CD4-positive, alpha-beta T cell (primary cell): ENCODE measurements at regions of chr6 and their contacts with region 1.

Region 1: DNA sequence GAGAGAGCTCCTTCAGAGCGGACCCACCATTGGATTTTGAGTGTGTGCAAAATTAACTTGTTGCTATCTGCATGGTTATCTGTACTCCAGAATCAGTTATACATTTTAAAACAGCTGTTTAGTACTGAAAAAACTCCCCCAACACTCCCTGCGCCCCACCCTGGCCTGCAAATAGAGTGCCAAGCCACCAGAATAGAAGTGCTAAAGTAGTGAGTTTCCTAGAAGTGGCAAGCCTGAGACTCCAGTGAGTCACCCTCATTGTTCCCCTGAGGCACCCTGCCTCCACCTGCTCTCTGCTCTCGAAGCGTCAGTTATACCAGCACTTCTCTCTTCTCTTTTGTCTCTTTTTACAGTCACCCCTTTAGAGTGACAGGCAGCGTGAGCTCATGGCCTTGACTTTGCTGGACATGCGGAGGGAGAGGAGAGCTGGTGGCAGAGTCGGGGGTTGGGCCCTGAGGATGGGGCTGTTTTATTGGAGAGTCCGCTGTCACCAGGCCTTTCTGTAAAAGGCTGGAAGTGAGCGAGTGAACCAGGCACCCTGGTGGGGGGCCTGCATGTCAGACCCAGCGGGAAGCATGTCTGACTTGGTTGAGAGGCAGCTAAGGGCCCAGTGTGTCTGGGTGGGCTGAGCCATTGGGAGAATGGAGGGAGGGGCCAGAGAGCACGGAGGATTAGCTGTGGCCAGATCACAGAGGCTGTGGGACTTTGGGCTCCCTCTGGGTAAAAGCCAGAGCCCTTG is 10.4 kb downstream of the IGF2R start:
- DNase-seq: peak in 10 of 14 experiments; percentile 22 to 75 (median 50)
- ATAC-seq: peak; percentile 57
- H3K4me3 ChIP-seq: no peak overlapping the region
- H3K4me3 Mint-ChIP-seq: peak overlapping the region; percentile 59
- H3K27ac ChIP-seq: peak overlapping the region; percentile 25 to 66
- H3K27ac Mint-ChIP-seq: peak overlapping the region; percentile 84
- H3K4me1 ChIP-seq: peaks cover 81% of the 10 kb centered on the region
- H3K4me1 Mint-ChIP-seq: peaks cover 94% of the 10 kb centered on the region
- H3K27me3 ChIP-seq: no peaks in the 10 kb centered on the region
- H3K27me3 Mint-ChIP-seq: no peaks in the 10 kb centered on the region
- CTCF ChIP-seq: no peak

Region 2: DNA sequence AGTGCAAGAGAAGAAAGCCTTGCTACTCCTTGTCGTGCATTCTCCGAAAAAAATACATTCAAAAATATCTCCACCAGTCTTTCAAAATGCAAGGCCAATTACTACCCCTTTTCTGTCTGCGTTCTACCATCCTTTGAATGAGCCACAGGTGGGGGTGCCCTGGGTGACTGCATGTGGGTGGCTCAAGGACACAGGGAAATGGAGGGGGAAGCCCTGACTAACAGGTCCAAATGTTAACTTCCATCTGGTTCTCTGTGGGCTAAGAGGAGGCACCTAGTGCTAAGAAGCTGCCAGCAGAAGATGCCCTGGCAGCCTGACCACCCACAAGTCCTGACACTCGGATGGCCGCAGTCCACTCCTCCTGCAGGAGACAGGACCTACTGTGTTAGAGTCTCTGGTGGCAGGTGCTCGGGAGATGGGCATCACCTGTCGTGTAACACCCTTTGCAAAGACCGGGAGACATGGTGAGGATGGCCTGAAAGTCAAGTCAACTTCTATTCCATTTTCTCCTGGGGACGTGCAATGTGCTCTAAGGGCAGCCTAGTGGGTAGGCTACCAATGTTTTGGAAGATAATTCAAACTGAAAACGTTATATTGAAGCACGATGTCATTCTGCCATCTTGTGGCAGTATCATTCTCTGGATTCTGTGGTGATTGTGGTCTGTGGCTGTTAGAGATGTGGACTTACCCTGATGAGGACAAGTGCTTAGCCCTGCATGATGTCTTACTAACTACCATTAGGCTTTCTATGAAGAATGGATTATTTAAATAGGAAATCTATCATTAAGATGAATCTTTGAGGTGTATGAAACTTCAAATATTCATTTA is 37.8 kb before region 1 on chr6:
- CTCF ChIA-PET with region 1: no interaction called
- POLR2A ChIA-PET with region 1: no interaction called
- intact Hi-C with region 1: no loop called
- DNase-seq: peak in 8 of 14 experiments; percentile 5 to 80 (median 22)
- ATAC-seq: peak; percentile 82
- H3K4me3 ChIP-seq: no peak overlapping the region
- H3K4me3 Mint-ChIP-seq: no peak overlapping the region
- H3K27ac ChIP-seq: no peak overlapping the region
- H3K27ac Mint-ChIP-seq: no peak overlapping the region
- H3K4me1 ChIP-seq: peaks cover 4% of the 10 kb centered on the region
- H3K4me1 Mint-ChIP-seq: peaks cover 8% of the 10 kb centered on the region
- H3K27me3 ChIP-seq: no peaks in the 10 kb centered on the region
- H3K27me3 Mint-ChIP-seq: peaks cover 5% of the 10 kb centered on the region
- CTCF ChIP-seq: peak; percentile 46

Region 3: GRCh38 chr6:159968440-159969203 is 10.7 kb before region 1 on chr6 and contains the start of gene IGF2R:
- CTCF ChIA-PET with region 1: interaction called, 3 read pairs
- POLR2A ChIA-PET with region 1: interaction called, 20 read pairs
- intact Hi-C with region 1: no loop called
- DNase-seq: peak; percentile 86 to 97 (median 94)
- ATAC-seq: peak; percentile 89
- H3K4me3 ChIP-seq: peak within 1 kb of the TSS; percentile 76
- H3K4me3 Mint-ChIP-seq: peak within 1 kb of the TSS; percentile 98
- H3K27ac ChIP-seq: peak within 1 kb of the TSS; percentile 31 to 42
- H3K27ac Mint-ChIP-seq: peak within 1 kb of the TSS; percentile 91
- H3K4me1 ChIP-seq: peaks cover 41% of the 10 kb centered on the region
- H3K4me1 Mint-ChIP-seq: peaks cover 45% of the 10 kb centered on the region
- H3K27me3 ChIP-seq: no peaks in the 10 kb centered on the region
- H3K27me3 Mint-ChIP-seq: no peaks in the 10 kb centered on the region
- CTCF ChIP-seq: no peak
- total RNA-seq, gene IGF2R: 43.8 to 46.7 TPM

Region 4: DNA sequence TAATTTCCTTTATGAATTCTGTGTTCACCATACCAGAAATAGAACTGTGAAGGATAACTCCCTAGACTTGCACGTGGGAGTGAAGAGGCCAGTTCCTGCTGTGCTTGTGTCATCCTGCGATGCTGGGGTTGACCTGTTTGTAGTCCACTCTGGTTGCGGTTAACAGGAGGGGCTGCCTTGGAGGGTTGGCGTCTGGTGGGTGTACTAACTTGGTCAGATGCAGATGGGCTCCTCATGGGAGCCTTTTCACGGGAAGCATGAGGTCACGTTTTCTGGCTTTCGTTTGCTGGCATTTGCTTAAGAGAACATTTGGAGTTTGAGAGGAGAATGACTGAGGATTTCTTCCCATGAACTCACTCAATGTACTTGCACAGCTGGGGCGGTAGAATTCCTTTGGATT is 30.8 kb after region 1 on chr6:
- CTCF ChIA-PET with region 1: no interaction called
- POLR2A ChIA-PET with region 1: interaction called, 32 read pairs
- intact Hi-C with region 1: loop called (anchors 5 kb)
- DNase-seq: no peak
- ATAC-seq: no peak
- H3K4me3 ChIP-seq: no peak overlapping the region
- H3K4me3 Mint-ChIP-seq: no peak overlapping the region
- H3K27ac ChIP-seq: no peak overlapping the region
- H3K27ac Mint-ChIP-seq: no peak overlapping the region
- H3K4me1 ChIP-seq: peaks cover 21% of the 10 kb centered on the region
- H3K4me1 Mint-ChIP-seq: peaks cover 59% of the 10 kb centered on the region
- H3K27me3 ChIP-seq: no peaks in the 10 kb centered on the region
- H3K27me3 Mint-ChIP-seq: no peaks in the 10 kb centered on the region
- CTCF ChIP-seq: no peak

Region 5: DNA sequence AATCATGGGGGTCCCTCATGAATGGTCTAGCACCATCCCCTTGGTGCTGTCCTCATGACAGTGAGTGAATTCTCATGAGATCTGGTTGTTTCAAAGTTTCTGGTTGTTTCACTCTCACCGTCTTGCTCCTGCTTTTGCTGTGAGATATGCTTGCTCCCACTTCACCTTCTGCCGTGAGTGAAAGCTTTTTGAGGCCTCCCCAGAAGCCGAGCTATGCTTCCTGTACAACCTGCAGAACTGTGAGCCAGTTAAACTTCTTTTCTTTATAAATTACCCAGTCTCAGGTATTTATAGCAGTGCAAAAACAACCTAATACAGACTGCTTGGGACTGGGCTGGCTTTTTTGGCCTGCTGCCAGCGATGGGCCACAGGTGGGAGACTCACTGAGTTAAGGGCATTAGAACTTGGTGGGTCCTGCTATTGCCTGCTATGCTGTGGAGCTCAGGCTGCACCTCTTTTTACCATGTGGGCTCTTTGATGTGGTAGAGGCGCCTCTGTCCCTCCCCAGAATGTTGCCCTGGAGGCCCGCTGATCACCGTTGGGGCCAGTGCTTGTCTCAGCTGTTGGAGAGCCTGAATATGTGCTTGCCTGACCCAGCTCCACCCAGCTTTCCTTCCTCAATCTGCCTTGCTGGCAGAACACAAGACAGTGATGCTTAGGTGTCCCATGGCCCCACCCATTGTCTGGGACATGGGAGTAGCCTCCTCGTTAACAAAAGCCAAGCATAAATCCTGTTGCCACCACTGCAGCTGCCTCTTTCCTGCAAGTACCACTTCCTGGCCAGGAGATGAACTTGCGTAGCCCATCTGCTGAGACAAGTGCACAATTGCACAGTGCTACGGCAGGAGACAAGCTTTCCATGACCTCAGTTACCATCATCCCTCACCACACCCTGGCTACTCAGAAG is 36.7 kb after region 1 on chr6:
- CTCF ChIA-PET with region 1: no interaction called
- POLR2A ChIA-PET with region 1: interaction called, 32 read pairs
- intact Hi-C with region 1: loop called (anchors 5 kb)
- DNase-seq: peak in 13 of 14 experiments; percentile 9 to 66 (median 29)
- ATAC-seq: peak; percentile 79
- H3K4me3 ChIP-seq: peak overlapping the region; percentile 3
- H3K4me3 Mint-ChIP-seq: peak overlapping the region; percentile 65
- H3K27ac ChIP-seq: peak overlapping the region; percentile 46 to 79
- H3K27ac Mint-ChIP-seq: peak overlapping the region; percentile 80
- H3K4me1 ChIP-seq: peaks cover 32% of the 10 kb centered on the region
- H3K4me1 Mint-ChIP-seq: peaks cover 62% of the 10 kb centered on the region
- H3K27me3 ChIP-seq: no peaks in the 10 kb centered on the region
- H3K27me3 Mint-ChIP-seq: no peaks in the 10 kb centered on the region
- CTCF ChIP-seq: no peak

Region 6: GRCh38 chr6:160167604-160168399 is 188.5 kb after region 1 on chr6:
- CTCF ChIA-PET with region 1: no interaction called
- POLR2A ChIA-PET with region 1: no interaction called
- intact Hi-C with region 1: no loop called
- DNase-seq: no peak
- ATAC-seq: no peak
- H3K4me3 ChIP-seq: no peak overlapping the region
- H3K4me3 Mint-ChIP-seq: no peak overlapping the region
- H3K27ac ChIP-seq: no peak overlapping the region
- H3K27ac Mint-ChIP-seq: no peak overlapping the region
- H3K4me1 ChIP-seq: no peaks in the 10 kb centered on the region
- H3K4me1 Mint-ChIP-seq: no peaks in the 10 kb centered on the region
- H3K27me3 ChIP-seq: peaks cover 0 to 5% of the 10 kb centered on the region in 2 experiments
- H3K27me3 Mint-ChIP-seq: peaks cover 30% of the 10 kb centered on the region
- CTCF ChIP-seq: no peak

Region 7: GRCh38 chr6:160337301-160337700 is 358.0 kb after region 1 on chr6:
- CTCF ChIA-PET with region 1: no interaction called
- POLR2A ChIA-PET with region 1: no interaction called
- intact Hi-C with region 1: no loop called
- DNase-seq: no peak
- ATAC-seq: no peak
- H3K4me3 ChIP-seq: no peak overlapping the region
- H3K4me3 Mint-ChIP-seq: no peak overlapping the region
- H3K27ac ChIP-seq: no peak overlapping the region
- H3K27ac Mint-ChIP-seq: no peak overlapping the region
- H3K4me1 ChIP-seq: no peaks in the 10 kb centered on the region
- H3K4me1 Mint-ChIP-seq: no peaks in the 10 kb centered on the region
- H3K27me3 ChIP-seq: peaks cover 5 to 6% of the 10 kb centered on the region in 2 experiments
- H3K27me3 Mint-ChIP-seq: peaks cover 41% of the 10 kb centered on the region
- CTCF ChIP-seq: no peak

Region 8: GRCh38 chr6:160348142-160349019 is 369.1 kb after region 1 on chr6 and contains the start of gene SLC22A3:
- CTCF ChIA-PET with region 1: no interaction called
- POLR2A ChIA-PET with region 1: no interaction called
- intact Hi-C with region 1: no loop called
- DNase-seq: no peak
- ATAC-seq: no peak
- H3K4me3 ChIP-seq: peak within 1 kb of the TSS; percentile 16
- H3K4me3 Mint-ChIP-seq: peak within 1 kb of the TSS; percentile 14
- H3K27ac ChIP-seq: no peak within 1 kb of the TSS
- H3K27ac Mint-ChIP-seq: no peak within 1 kb of the TSS
- H3K4me1 ChIP-seq: peaks cover 5% of the 10 kb centered on the region
- H3K4me1 Mint-ChIP-seq: peaks cover 4% of the 10 kb centered on the region
- H3K27me3 ChIP-seq: peaks cover 19 to 68% of the 10 kb centered on the region in 2 experiments
- H3K27me3 Mint-ChIP-seq: peaks cover 72% of the 10 kb centered on the region
- CTCF ChIP-seq: no peak
- total RNA-seq, gene SLC22A3: not detected